ENCODE measurements at regions of chrX and their contacts with region 1.

Region 1: DNA sequence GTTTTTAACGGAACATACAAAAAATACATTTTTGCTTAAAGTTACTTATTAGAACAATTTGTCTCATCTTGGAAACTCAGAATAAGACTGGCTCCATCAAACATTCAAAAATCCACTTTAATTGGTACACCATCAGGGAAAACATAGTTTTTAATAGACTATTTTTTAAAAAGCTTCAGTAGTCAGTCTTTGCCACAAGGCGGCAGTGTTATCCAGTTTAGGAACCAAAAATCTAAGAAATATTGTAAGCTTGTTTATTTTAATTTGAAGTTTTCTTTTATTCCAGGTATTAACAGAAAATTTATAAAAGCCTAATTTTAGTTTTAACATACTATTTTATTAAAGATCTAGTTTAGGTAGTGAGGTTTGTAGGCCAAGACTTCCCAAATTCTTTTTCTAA is 107.7 kb downstream of the APOOL start:
- DNase-seq: no peak
- H3K4me3 Mint-ChIP-seq: no peak overlapping the region
- H3K27ac Mint-ChIP-seq: no peak overlapping the region
- H3K4me1 Mint-ChIP-seq: no peaks in the 10 kb centered on the region
- H3K27me3 Mint-ChIP-seq: no peaks in the 10 kb centered on the region
- CTCF ChIP-seq: no peak

Region 2: DNA sequence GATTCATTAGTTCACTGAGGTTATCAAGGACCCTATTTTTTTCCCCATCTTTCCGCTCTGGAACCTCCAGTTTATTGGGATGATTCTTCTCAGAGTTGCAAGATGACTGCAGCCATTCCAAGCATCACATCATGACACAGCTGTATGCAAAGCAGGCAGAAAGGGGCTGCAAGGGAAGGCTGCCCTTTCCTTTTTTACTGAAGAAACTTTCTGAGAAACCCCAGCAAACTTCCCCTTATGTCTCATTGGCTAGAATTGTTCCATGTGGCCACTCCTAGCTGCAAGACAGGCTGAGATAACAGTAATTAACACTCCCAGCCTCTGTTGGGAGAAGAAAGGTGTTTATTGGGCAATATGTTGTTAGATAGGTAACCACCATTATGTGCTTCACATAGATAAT is 29.6 kb after region 1 on chrX:
- CTCF ChIA-PET with region 1: no interaction called
- intact Hi-C with region 1: no loop called
- DNase-seq: no peak
- H3K4me3 Mint-ChIP-seq: no peak overlapping the region
- H3K27ac Mint-ChIP-seq: no peak overlapping the region
- H3K4me1 Mint-ChIP-seq: no peaks in the 10 kb centered on the region
- H3K27me3 Mint-ChIP-seq: no peaks in the 10 kb centered on the region
- CTCF ChIP-seq: no peak

Region 3: DNA sequence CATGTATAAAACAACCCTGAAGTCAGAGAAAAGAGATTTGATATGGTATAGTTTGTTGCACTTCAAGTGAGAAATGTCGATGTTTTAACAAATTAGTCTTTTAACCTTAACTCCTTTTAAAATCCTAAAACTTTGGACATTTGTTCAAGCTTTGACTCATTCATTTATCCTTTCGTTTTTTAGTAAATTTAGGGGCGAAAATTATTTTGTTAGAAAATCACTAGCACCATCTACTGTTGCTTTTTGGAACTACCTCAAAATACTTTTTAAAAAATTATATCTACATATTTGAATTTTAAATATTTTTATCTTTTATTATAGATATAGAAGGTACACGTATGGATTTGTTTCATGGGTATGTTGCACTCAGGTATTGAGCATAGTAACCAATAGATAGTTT is 433.3 kb after region 1 on chrX:
- CTCF ChIA-PET with region 1: interaction called, 4 read pairs
- intact Hi-C with region 1: loop called (anchors 1 kb)
- DNase-seq: no peak
- H3K4me3 Mint-ChIP-seq: no peak overlapping the region
- H3K27ac Mint-ChIP-seq: no peak overlapping the region
- H3K4me1 Mint-ChIP-seq: no peaks in the 10 kb centered on the region
- H3K27me3 Mint-ChIP-seq: no peaks in the 10 kb centered on the region
- CTCF ChIP-seq: no peak

Measured in Calu3 (cell line).